Ascending aorta (tissue), 2 donors: ENCODE measurements at regions of chr7 and their contacts with region 1.

Region 1: GRCh38 chr7:82572195-82572880 is 128.8 kb upstream of the CACNA2D1 start:
- DNase-seq: peak; percentile 14 to 88
- H3K4me3 ChIP-seq: peak overlapping the region in 1 of 2 donors; percentile 17
- H3K27ac ChIP-seq: no peak overlapping the region
- H3K4me1 ChIP-seq: no peaks in the 10 kb centered on the region
- H3K27me3 ChIP-seq: no peaks in the 10 kb centered on the region
- CTCF ChIP-seq: peak; percentile 58 to 90 (median 85)

Region 2: GRCh38 chr7:82044497-82045080 is 527.7 kb before region 1 on chr7:
- intact Hi-C with region 1: loop called (anchors 1 kb)
- DNase-seq: no peak
- H3K4me3 ChIP-seq: no peak overlapping the region
- H3K27ac ChIP-seq: no peak overlapping the region
- H3K4me1 ChIP-seq: peaks cover 0 to 3% of the 10 kb centered on the region in 2 donors
- H3K27me3 ChIP-seq: no peaks in the 10 kb centered on the region
- CTCF ChIP-seq: peak; percentile 30 to 73 (median 61)

Region 3: GRCh38 chr7:82234457-82235049 is 337.8 kb before region 1 on chr7:
- intact Hi-C with region 1: loop called (anchors 5 kb)
- DNase-seq: no peak
- H3K4me3 ChIP-seq: no peak overlapping the region
- H3K27ac ChIP-seq: no peak overlapping the region
- H3K4me1 ChIP-seq: no peaks in the 10 kb centered on the region
- H3K27me3 ChIP-seq: no peaks in the 10 kb centered on the region
- CTCF ChIP-seq: peak; percentile 17 to 59 (median 22)

Region 4: GRCh38 chr7:82443547-82444219 is 128.7 kb before region 1 on chr7 and contains the start of gene CACNA2D1:
- intact Hi-C with region 1: loop called (anchors 5 kb)
- DNase-seq: peak; percentile 38 to 90
- H3K4me3 ChIP-seq: peak within 1 kb of the TSS; percentile 81 to 96
- H3K27ac ChIP-seq: peak within 1 kb of the TSS; percentile 87 to 94
- H3K4me1 ChIP-seq: no peaks in the 10 kb centered on the region
- H3K27me3 ChIP-seq: no peaks in the 10 kb centered on the region
- CTCF ChIP-seq: peak in 1 of 3 experiments; percentile 29
- total RNA-seq, gene CACNA2D1: 17.3 TPM

Region 5: GRCh38 chr7:82593780-82594179 is 21.4 kb after region 1 on chr7:
- intact Hi-C with region 1: no loop called
- DNase-seq: no peak
- H3K4me3 ChIP-seq: no peak overlapping the region
- H3K27ac ChIP-seq: no peak overlapping the region
- H3K4me1 ChIP-seq: no peaks in the 10 kb centered on the region
- H3K27me3 ChIP-seq: no peaks in the 10 kb centered on the region
- CTCF ChIP-seq: no peak